Mammary epithelial cell (primary cell): ENCODE measurements at regions of chr1 and their contacts with region 1.

Region 1: GRCh38 chr1:59156526-59157199 is 140.2 kb upstream of the FGGY start:
- DNase-seq: no peak
- H3K4me3 ChIP-seq: no peak overlapping the region
- H3K27ac ChIP-seq: no peak overlapping the region
- H3K4me1 ChIP-seq: peaks cover 8% of the 10 kb centered on the region
- H3K27me3 ChIP-seq: no peaks in the 10 kb centered on the region
- CTCF ChIP-seq: no peak

Region 2: DNA sequence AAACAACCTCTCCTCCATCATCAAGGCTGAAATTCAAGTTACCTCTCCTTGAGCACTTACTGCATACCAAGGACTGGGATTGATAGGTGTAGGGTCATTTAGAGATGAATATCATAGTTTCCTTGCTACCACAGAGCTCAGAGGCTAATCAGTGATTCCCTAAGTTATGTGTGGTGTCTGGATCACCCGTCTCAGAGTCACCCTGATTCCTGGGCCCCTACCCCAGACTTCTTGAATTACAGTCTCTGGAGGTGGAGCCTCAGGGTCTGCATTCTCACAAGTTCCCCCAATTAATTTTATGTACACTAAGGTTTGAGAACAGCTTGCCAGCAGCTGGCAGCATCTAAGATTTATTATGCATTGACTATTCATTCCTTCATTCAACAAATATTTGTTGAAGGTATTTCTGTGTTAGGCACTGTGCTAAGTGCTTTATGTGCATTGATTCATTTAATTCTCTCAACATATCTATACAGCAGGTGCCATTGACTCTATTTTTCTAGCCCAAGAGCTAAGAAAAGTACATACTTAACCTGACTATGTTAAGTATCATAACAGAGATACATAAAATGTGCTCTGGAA is 42.7 kb before region 1 on chr1:
- CTCF ChIA-PET with region 1: no interaction called
- dilution Hi-C with region 1: loop called (anchors 5 kb)
- in situ Hi-C with region 1: no loop called
- intact Hi-C with region 1: no loop called
- DNase-seq: no peak
- H3K4me3 ChIP-seq: no peak overlapping the region
- H3K27ac ChIP-seq: no peak overlapping the region
- H3K4me1 ChIP-seq: peaks cover 14% of the 10 kb centered on the region
- H3K27me3 ChIP-seq: no peaks in the 10 kb centered on the region
- CTCF ChIP-seq: no peak